ENCODE measurements at regions of chr22 and their contacts with region 1.

Region 1: GRCh38 chr22:40487663-40488249 is 117.4 kb downstream of the SGSM3 start:
- DNase-seq: no peak
- H3K4me3 Mint-ChIP-seq: no peak overlapping the region
- H3K27ac Mint-ChIP-seq: no peak overlapping the region
- H3K4me1 Mint-ChIP-seq: peaks cover 42% of the 10 kb centered on the region
- H3K27me3 Mint-ChIP-seq: no peaks in the 10 kb centered on the region

Region 2: DNA sequence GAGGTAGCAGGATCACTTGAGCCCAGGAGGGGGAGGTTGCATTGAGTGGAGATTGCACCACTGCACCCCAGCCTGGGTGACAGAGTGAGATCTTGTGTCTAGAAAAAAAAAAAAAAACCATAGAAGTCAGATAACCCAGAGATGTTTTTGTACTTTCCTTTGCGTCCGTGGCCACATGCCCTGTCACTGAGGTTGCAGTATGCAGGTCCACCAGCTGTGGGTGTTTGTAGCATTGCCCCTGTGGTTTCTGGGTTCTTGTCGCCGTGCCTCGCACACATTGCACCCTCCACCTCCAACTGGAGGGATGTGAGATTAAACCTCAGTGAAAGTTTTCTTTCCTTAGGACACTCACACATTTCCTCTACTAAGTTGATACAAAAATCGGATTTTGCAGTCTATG is 239.8 kb before region 1 on chr22:
- CTCF ChIA-PET with region 1: no interaction called
- intact Hi-C with region 1: no loop called
- DNase-seq: peak; percentile 58
- H3K4me3 Mint-ChIP-seq: peak overlapping the region; percentile 32
- H3K27ac Mint-ChIP-seq: peak overlapping the region; percentile 22
- H3K4me1 Mint-ChIP-seq: peaks cover 66% of the 10 kb centered on the region
- H3K27me3 Mint-ChIP-seq: no peaks in the 10 kb centered on the region

Region 3: GRCh38 chr22:40463017-40463631 is 24.6 kb before region 1 on chr22:
- CTCF ChIA-PET with region 1: interaction called, 7 read pairs
- intact Hi-C with region 1: loop called (anchors 2 kb)
- DNase-seq: peak; percentile 66
- H3K4me3 Mint-ChIP-seq: peak overlapping the region; percentile 97
- H3K27ac Mint-ChIP-seq: peak overlapping the region; percentile 97
- H3K4me1 Mint-ChIP-seq: peaks cover 68% of the 10 kb centered on the region
- H3K27me3 Mint-ChIP-seq: no peaks in the 10 kb centered on the region

Region 4: DNA sequence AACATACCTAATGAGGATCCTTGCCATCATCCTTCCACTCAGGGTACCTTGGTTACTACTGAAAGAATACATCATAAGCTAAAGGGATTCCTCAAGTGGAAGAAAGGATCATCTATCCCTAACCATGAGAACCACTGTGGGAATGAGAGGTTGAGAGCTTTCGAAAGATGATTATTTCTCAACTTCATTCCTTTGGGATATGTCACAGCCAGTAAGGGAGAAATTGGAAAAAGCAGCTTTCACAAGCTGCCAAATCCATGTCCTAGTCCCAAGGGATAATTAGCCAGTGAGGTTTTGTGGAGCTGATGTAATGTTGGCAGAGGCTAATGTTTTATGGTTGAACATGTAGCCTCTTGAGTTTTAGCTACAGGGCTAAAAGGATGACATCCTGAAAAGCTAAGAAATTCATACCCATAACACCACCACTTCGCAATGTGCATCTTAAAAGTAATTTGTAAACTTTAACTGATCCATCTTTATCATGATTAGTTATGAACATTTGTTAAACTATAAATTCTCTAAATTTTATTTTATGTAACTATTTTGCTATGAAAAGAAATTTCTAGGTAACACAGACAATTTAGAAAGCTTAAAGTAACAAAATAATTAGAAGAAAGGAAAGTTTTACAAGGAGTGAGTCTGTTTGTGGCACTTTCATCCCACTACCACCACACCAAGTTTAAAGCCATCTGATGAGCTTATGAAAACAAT is 24.8 kb after region 1 on chr22:
- CTCF ChIA-PET with region 1: interaction called, 11 read pairs
- intact Hi-C with region 1: no loop called
- DNase-seq: no peak
- H3K4me3 Mint-ChIP-seq: no peak overlapping the region
- H3K27ac Mint-ChIP-seq: no peak overlapping the region
- H3K4me1 Mint-ChIP-seq: peaks cover 19% of the 10 kb centered on the region
- H3K27me3 Mint-ChIP-seq: no peaks in the 10 kb centered on the region

Region 5: GRCh38 chr22:40645579-40646197 is 157.9 kb after region 1 on chr22:
- CTCF ChIA-PET with region 1: interaction called, 21 read pairs
- intact Hi-C with region 1: no loop called
- DNase-seq: no peak
- H3K4me3 Mint-ChIP-seq: no peak overlapping the region
- H3K27ac Mint-ChIP-seq: no peak overlapping the region
- H3K4me1 Mint-ChIP-seq: peaks cover 4% of the 10 kb centered on the region
- H3K27me3 Mint-ChIP-seq: no peaks in the 10 kb centered on the region